HAP-1 (cell line): ENCODE measurements at regions of chr15 and their contacts with region 1.

Region 1: GRCh38 chr15:80776420-80777045 is 2.6 kb upstream of the CEMIP start:
- DNase-seq: peak; percentile 82 to 92
- H3K4me3 ChIP-seq: no peak overlapping the region
- H3K4me1 ChIP-seq: peaks cover 8% of the 10 kb centered on the region
- H3K27me3 ChIP-seq: peaks cover 25% of the 10 kb centered on the region

Region 2: DNA sequence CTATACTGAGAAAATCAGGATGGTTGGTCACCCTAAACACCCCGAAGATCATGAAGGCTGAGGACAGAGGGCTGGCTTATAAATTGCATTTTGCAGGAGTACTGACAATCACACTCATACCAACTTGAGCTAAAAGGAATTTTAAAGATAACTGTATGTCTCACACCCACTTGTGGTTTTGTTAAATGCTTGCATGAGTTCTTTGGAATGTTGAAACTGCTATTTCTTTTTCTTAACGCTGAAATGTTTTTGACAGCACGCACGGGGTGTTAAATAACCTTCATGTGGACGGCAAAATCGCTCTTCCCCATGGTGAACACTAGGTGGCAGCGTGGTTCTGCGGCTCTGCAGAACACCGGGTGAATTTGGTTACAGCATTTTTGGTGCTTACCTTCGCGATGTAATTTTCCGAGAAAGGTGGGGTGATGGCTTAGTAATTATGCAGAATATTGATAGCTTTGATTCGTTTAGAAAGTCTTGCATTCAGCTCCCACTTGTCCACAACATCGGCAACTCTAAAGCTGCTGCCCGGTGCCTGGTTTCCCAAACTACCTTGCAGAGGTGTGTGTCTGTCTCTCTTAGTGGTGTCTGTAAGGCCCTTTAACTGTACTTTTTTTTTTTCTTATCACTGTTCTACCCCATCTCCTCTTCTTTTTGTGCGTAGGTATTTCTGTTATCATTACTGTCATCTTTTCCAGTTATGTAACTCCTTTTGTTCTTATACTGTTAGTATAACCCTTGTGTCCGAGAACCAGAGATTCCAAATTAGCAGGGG is 320.7 kb before region 1 on chr15:
- in situ Hi-C with region 1: loop called (anchors 5 kb)
- DNase-seq: peak; percentile 80 to 81
- H3K4me3 ChIP-seq: no peak overlapping the region
- H3K4me1 ChIP-seq: peaks cover 2% of the 10 kb centered on the region; the same call in 1 of the 2 replicates
- H3K27me3 ChIP-seq: no peaks in the 10 kb centered on the region

Region 3: GRCh38 chr15:80567721-80568157 is 208.8 kb before region 1 on chr15:
- in situ Hi-C with region 1: loop called (anchors 5 kb)
- DNase-seq: peak; percentile 86 to 87
- H3K4me3 ChIP-seq: no peak overlapping the region
- H3K4me1 ChIP-seq: no peaks in the 10 kb centered on the region
- H3K27me3 ChIP-seq: no peaks in the 10 kb centered on the region